Activated B cell treated with CpG ODN at 0.5 μM for 24 hours (primary cell): ENCODE measurements at regions of chr17 and their contacts with region 1.

Region 1: DNA sequence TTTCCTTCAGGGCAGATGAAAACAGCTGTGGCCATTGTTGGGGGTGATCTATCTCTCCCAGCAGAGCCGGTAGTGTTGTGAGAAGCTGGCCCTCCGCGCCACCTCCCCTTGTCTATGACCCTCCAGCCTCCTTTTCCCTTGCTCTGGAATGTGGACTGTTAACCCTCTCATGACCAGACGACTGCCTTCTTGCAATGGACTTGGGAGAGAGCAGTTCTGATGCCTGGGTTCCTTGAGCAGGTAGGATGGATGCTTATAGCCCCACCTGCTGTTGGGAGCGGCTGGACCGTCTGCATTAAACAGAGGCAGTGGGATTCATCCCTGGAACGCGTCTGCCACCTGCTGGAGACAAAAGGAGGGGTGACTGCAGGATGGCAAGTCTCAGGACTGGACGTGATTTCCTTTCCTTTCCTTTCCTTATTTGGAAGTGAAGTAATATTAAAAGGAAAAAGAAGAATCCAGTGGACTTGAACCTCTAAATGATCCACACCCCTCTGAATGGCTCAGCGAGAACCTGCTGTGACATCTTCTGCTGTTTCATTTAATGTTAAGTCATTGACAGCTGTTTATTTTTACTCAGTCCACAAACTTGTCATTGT is 1.8 kb upstream of the SOST start:
- DNase-seq: peak; percentile 75
- ATAC-seq: peak; percentile 99
- H3K4me3 Mint-ChIP-seq: no peak overlapping the region
- H3K27ac Mint-ChIP-seq: no peak overlapping the region
- H3K4me1 Mint-ChIP-seq: no peaks in the 10 kb centered on the region
- H3K27me3 Mint-ChIP-seq: peaks cover 31% of the 10 kb centered on the region
- CTCF ChIP-seq: peak; percentile 62

Region 2: DNA sequence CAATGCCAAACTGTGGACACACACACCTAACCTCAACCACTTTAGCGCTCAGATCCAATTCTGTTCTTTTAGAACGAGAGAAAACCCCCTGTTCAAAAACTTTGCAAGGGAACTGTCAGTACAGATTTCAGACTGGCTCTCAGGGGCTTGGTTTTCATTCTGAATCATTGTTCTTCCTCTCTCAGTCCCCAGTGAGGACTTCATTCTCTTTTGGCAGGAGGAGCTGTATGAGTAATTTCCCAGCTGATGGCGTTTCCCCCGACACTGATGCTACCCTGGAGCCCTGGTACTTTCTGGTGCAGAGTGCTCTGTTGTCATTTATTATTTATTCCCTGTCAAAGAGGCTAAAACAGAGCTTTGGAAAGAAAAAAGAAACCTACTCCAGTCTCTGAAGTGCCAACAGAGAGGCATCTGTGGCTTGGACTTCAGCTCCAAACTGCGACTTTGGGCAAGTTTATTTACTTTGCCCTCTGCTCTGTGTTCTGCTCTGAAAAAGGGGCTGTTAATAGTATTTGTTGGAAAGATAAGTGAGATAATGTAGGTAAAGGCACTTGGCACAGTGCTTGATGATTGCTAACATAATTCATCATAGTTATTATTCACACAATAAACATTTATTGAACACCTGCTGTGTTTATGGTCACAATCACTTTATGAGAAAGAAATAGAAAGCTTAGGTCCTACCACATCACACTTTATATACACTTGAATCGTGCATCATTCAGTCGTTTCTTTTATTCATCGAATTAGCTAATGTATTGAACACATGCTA is 242.6 kb before region 1 on chr17:
- CTCF ChIA-PET with region 1: no interaction called
- POLR2A ChIA-PET with region 1: no interaction called
- intact Hi-C with region 1: loop called (anchors 1 kb)
- DNase-seq: no peak
- ATAC-seq: no peak
- H3K4me3 Mint-ChIP-seq: no peak overlapping the region
- H3K27ac Mint-ChIP-seq: no peak overlapping the region
- H3K4me1 Mint-ChIP-seq: no peaks in the 10 kb centered on the region
- H3K27me3 Mint-ChIP-seq: no peaks in the 10 kb centered on the region
- CTCF ChIP-seq: no peak

Region 3: DNA sequence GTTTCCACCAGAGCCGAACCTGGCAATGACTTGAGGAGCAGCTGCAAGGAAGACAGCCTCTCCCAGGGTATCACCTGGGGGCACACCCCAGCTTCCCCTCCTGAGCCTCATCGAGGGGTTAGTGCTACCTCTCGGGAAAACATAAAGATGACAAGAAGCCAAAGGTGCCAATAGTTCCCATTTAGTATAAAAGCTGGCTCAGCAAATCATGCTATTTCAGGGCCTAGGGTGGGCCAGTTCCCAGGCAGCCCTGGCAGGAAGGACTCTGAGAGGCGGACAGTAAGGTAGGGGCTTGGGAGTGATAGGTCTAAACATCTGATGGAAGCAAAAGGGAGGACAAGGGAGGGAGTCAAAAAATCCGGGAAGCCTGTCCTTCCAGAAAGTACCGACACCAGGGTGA is 48.0 kb before region 1 on chr17:
- CTCF ChIA-PET with region 1: no interaction called
- POLR2A ChIA-PET with region 1: no interaction called
- intact Hi-C with region 1: no loop called
- DNase-seq: no peak
- ATAC-seq: no peak
- H3K4me3 Mint-ChIP-seq: no peak overlapping the region
- H3K27ac Mint-ChIP-seq: no peak overlapping the region
- H3K4me1 Mint-ChIP-seq: peaks cover 12% of the 10 kb centered on the region
- H3K27me3 Mint-ChIP-seq: peaks cover 46% of the 10 kb centered on the region
- CTCF ChIP-seq: no peak